Uterus (tissue), 4 donors: ENCODE measurements at regions of chr2 and their contacts with region 1.

Region 1: DNA sequence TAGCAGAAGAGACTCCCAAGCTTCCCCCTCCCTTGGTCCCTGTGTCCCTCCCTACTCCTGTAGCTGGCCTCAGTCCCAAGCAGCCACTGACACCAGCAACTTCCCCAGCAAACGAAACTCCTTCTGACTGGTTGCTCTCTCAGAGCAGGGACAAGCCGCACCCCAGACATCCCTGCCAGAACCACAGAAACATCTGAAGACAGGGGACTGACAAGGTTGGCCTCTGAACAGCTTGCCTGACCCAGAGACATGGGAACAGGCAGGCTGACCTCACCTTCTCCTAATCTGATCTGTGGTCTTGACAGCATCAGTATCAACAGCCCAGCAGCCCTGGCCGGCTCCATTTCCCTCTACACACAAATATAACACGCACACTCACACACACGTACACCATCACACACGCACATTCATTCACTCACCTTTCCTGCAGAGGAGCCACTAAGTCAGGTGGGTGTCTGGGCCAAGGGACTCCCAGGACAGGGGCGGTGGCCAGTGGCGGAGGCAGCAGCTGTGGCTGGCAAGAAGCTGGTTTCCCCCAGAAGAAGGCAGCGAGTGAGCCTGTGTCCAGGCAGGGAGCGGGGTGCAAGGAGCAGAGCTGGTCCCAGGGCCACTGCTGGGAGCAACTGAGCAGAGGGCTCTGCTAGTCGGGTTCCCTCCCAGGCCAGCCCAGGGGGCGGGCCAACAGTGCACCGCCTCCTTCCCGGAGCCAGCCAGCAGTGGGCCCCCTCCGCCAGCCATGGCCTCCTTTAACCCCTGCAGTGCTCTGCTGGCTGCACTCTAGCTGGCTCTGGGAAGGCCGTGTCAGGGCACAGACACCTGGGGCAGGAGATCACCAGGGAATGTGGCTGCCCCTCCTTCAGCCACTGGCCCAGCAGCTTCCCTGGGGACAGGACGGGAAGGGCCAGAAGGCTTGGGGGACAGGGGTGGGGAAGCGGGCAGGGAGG is 59.1 kb downstream of the TNS1 start:
- DNase-seq: peak; percentile 85 to 87
- H3K4me3 ChIP-seq: peak overlapping the region; percentile 59 to 88
- H3K27ac ChIP-seq: peak overlapping the region; percentile 92 to 97
- H3K4me1 ChIP-seq: no peaks in the 10 kb centered on the region
- H3K27me3 ChIP-seq: no peaks in the 10 kb centered on the region
- CTCF ChIP-seq: peak; percentile 51 to 61 (median 56)
- POLR2A ChIP-seq: peak; percentile 78 to 84

Region 2: DNA sequence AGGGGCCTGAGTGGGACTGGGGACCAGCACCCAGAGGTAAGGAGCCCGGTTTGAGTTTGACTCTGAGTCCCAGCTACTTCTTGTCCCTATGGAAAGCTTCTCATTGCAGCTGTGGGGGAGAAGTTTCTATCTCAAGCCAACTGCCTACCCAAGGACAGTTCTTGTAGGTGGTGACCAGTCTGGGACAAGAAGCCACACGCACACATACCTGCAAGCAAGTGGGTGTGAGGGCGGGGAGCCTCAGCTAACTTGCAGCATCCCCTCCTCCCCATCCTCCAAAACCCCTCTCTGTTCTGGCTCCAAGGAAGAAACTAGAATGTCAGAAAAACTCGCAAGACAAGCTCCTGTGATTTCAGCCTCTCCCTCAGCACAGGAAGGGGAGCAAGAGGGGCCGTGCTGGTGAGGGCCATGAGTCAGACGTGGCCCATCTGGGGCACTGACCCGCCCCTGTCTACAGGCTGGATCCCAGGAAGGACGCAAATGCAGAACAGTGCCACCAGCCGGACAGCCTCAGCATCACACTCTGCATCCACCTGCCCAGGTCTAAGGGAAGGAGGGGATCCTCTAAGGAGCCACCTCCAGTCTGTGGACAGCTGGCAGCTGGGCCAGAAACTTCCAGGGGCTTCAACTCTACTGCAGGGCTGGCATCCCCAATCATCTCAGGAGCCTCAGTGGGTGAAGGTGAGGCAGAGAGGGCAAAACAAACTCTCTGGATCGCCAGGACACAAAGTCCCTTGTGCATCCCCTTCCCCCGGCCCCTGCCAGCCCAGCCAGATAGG is 44.3 kb before region 1 on chr2:
- intact Hi-C with region 1: loop called (anchors 5 kb)
- DNase-seq: peak; percentile 81 to 89
- H3K4me3 ChIP-seq: no peak overlapping the region
- H3K27ac ChIP-seq: peak overlapping the region; percentile 92 to 97
- H3K4me1 ChIP-seq: peaks cover 18 to 40% of the 10 kb centered on the region in 2 donors
- H3K27me3 ChIP-seq: no peaks in the 10 kb centered on the region
- CTCF ChIP-seq: peak; percentile 56 to 74 (median 70)
- POLR2A ChIP-seq: peak in 1 of 2 donors; percentile 24

Region 3: GRCh38 chr2:217993817-217994463 is 50.2 kb after region 1 on chr2:
- intact Hi-C with region 1: loop called (anchors 10 kb)
- DNase-seq: peak; percentile 69
- H3K4me3 ChIP-seq: no peak overlapping the region
- H3K27ac ChIP-seq: peak overlapping the region; percentile 65 to 78
- H3K4me1 ChIP-seq: peaks cover 6 to 9% of the 10 kb centered on the region in 2 donors
- H3K27me3 ChIP-seq: no peaks in the 10 kb centered on the region
- CTCF ChIP-seq: peak; percentile 60 to 77 (median 70)
- POLR2A ChIP-seq: no peak

Region 4: DNA sequence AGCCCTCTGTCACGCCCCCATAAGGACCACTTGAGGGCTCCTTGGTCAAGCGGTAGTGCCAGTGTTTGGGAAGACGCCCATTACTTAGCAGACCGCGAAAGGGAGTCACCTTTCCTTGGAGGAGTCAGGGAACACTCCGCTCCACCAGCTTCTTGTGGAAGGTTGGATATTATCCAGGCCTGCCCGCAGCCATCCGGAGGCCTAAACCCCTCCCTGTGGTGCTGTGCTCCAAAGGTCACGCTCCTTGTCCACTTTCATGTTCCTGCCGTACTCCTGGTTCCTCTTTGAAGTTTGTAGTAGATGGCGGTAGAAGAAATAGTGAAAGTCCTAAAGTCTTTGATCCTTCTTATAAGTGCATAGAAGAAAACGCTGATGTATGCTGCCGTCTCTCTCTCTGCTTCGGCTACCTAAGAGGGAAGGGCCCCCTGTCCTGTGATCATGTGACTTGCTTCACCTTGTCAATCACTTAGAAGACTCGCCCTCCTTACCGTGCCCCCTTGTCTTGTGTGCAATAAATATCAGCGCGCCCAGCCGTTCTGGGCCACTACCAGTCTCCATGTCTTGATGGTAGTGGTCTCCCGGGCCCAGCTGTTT is 411.2 kb after region 1 on chr2:
- intact Hi-C with region 1: no loop called
- DNase-seq: no peak
- H3K4me3 ChIP-seq: no peak overlapping the region
- H3K27ac ChIP-seq: no peak overlapping the region
- H3K4me1 ChIP-seq: peaks cover 0 to 5% of the 10 kb centered on the region in 2 donors
- H3K27me3 ChIP-seq: no peaks in the 10 kb centered on the region
- CTCF ChIP-seq: no peak
- POLR2A ChIP-seq: no peak